Pancreas (tissue), 10 donors: ENCODE measurements at regions of chr6 and their contacts with region 1.

Region 1: DNA sequence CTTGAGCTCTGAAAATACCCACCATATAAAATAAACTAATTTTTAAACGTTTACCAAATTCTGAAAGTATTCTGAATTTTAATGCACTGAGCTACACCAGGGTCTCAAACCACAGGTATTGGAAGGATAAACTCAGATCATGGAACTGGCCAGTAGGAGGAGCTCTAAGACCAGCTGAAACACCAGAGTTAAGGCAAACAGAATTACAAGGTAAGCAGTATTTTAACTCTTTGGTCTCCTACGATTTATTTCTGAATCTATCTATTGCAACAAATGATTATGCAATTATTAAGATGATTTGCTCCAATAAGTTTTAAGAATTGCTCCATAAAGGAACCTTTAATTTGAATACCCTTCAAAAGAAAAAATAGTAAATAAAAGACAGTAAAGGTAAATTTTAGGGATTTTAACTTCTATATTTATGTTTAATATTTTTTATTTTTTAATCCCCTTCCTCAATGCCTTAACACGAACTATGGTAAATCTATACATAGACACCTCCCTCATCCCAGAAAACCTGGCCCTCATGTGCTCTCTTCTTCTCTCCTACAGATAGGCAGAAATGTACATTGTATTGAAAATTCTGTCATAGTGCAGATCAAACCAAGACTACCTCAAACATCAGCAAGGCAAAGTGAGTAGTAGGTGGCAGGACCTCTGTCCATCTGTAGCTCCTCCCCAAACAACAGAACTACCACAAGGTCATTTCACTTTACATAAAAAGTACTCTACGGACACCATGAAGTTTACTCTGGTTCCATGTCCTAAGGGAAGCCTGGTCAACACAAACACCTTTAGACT is 58.4 kb downstream of the SMLR1 start:
- DNase-seq: peak in 3 of 6 donors; percentile 56 to 78 (median 63)
- ATAC-seq: peak; percentile 81 to 98 (median 97)
- H3K4me3 ChIP-seq: no peak overlapping the region
- H3K27ac ChIP-seq: no peak overlapping the region
- H3K4me1 ChIP-seq: no peaks in the 10 kb centered on the region
- H3K27me3 ChIP-seq: no peaks in the 10 kb centered on the region
- CTCF ChIP-seq: peak; percentile 62 to 88 (median 81)

Region 2: DNA sequence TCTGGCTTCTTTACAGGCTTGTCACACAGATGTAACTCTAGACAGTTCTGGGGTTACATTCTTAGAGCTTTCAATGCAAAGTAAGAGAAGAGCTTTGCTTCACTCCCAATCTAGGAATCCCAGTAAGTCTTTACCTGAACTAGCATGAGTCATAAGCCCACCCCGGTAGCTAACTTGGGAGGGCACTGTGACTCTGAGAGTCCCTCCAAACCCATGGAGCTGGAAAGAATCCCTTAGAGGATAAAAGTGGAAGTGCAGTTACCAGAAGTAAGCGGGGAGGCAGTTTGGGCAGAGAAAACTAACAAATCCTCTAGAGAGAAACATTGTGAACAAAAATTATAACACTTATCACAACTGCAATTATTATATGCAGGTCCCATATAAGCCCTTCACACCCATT is 142.4 kb before region 1 on chr6:
- intact Hi-C with region 1: no loop called
- DNase-seq: no peak
- ATAC-seq: no peak
- H3K4me3 ChIP-seq: no peak overlapping the region
- H3K27ac ChIP-seq: no peak overlapping the region
- H3K4me1 ChIP-seq: no peaks in the 10 kb centered on the region
- H3K27me3 ChIP-seq: no peaks in the 10 kb centered on the region
- CTCF ChIP-seq: no peak

Region 3: GRCh38 chr6:131116749-131117360 is 231.3 kb after region 1 on chr6:
- intact Hi-C with region 1: loop called in 2 of 3 experiments (anchors 5 kb)
- DNase-seq: no peak
- ATAC-seq: peak in 3 of 4 donors; percentile 76 to 83 (median 83)
- H3K4me3 ChIP-seq: no peak overlapping the region
- H3K27ac ChIP-seq: no peak overlapping the region
- H3K4me1 ChIP-seq: no peaks in the 10 kb centered on the region
- H3K27me3 ChIP-seq: no peaks in the 10 kb centered on the region
- CTCF ChIP-seq: peak; percentile 15 to 31 (median 24)

Region 4: GRCh38 chr6:131532580-131533039 is 647.0 kb after region 1 on chr6:
- intact Hi-C with region 1: loop called in 1 of 3 experiments (anchors 10 kb)
- DNase-seq: no peak
- ATAC-seq: no peak
- H3K4me3 ChIP-seq: no peak overlapping the region
- H3K27ac ChIP-seq: no peak overlapping the region
- H3K4me1 ChIP-seq: no peaks in the 10 kb centered on the region
- H3K27me3 ChIP-seq: no peaks in the 10 kb centered on the region
- CTCF ChIP-seq: no peak